Activated T-helper 1 cell treated with anti-CD3 and anti-CD28 coated beads, Interleukin-12 subunit alpha, Interleukin-12 subunit beta, Interleukin-2, Interleukin-4 antibody, amounts not matched to agents 30 ng/mL and 10 ng/mL and 1 ng/mL, durations not matched to agents 14 hours and 24 hours and 36 hours (primary cell): ENCODE measurements at regions of chr1 and their contacts with region 1.

Region 1: DNA sequence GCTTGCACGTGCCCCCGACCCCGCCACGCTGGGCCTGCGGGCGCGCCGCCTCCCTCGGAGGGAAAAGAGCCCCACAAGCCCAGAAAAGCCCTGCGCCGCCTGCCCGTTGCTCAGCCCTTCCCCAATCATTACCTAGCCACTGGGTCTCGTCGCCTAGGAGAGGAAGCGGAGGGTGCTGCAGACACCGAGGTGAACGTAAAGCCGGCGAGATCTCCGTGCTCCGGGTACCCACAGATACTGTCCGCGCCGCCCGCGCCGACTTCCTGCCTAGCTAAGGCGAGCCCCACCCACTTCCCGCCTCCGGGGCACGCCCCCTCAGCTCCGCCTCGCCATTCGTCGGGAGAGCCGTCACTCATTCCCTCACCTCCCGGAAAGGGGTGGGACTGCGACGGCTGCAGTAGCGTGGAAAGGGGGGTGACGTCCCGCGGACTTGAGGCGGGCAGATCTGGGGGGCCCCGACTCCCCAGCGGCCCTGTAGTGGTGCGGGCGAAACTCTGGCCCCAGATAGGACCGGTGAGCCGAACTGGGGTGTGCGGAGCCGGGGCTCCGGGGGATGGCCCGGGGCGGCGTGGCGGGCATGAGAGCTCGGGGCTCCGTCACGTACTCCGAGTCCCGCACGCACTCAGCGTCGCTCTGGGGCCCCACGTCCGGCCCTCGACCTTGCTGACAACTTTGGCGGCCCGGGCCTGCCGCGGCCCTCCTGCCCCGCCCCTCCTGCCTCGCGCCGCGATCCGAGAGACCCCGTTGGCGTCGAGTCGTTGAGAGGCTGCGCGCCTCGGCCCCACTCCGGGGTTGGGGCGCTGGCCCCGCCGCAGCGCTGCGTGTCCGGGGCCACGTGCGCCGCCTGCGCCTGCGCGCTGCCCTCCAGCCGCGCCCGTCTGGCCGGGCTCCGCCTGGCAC is at the start of gene ENO1:
- DNase-seq: peak; percentile 99
- H3K4me3 Mint-ChIP-seq: peak within 1 kb of the TSS; percentile 99
- H3K27ac Mint-ChIP-seq: peak within 1 kb of the TSS; percentile 100
- H3K4me1 Mint-ChIP-seq: peaks cover 43% of the 10 kb centered on the region
- H3K27me3 Mint-ChIP-seq: peaks cover 2% of the 10 kb centered on the region
- total RNA-seq, gene ENO1: 3,370 and 3,388 TPM in 2 replicates

Region 2: GRCh38 chr1:8604041-8604945 is 274.4 kb before region 1 on chr1:
- intact Hi-C with region 1: loop called (anchors 1 kb)
- DNase-seq: peak; percentile 34
- H3K4me3 Mint-ChIP-seq: peak overlapping the region; percentile 61
- H3K27ac Mint-ChIP-seq: peak overlapping the region; percentile 94
- H3K4me1 Mint-ChIP-seq: peaks cover 48% of the 10 kb centered on the region
- H3K27me3 Mint-ChIP-seq: no peaks in the 10 kb centered on the region

Region 3: DNA sequence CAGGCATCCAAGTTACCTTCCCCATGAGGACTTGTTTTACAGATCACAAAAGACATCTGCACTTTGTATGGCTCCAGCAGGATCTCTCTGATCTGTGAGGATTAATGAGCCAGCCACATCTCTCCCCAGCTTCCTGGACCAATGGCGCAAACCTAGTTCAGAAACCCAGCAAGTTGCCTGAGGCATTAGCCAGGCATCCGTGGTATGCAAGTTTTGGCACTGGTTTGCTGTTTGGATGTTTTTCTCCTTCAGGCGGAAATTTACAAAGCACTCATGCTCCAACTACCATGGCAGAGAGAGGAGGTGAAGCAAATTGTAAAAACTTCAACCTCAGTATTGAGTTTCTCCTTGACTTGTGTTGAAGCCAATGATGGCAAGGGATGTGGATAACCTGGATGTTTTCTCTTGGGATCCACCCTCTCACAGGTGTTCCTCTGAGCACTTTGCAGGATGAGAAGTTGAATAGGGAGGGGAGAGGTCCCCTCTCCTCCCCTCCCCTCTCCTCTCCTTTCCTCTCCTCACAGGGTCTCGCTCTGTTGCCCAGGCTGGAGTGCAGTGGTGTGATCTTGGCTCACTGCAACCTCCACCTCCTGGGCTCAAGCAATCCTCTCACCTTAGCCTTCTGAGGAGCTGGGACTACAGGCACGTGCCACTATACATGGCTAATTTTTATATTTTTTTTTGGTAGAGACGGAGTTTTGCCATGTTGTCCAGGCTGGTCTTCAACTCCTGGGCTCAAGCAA is 25.4 kb after region 1 on chr1:
- intact Hi-C with region 1: loop called (anchors 1 kb)
- DNase-seq: no peak
- H3K4me3 Mint-ChIP-seq: no peak overlapping the region
- H3K27ac Mint-ChIP-seq: peak overlapping the region; percentile 80
- H3K4me1 Mint-ChIP-seq: peaks cover 51% of the 10 kb centered on the region
- H3K27me3 Mint-ChIP-seq: no peaks in the 10 kb centered on the region

Region 4: GRCh38 chr1:8962812-8963530 is 84.3 kb after region 1 on chr1:
- intact Hi-C with region 1: loop called (anchors 2 kb)
- DNase-seq: no peak
- H3K4me3 Mint-ChIP-seq: peak overlapping the region; percentile 49
- H3K27ac Mint-ChIP-seq: peak overlapping the region; percentile 74
- H3K4me1 Mint-ChIP-seq: peaks cover 85% of the 10 kb centered on the region
- H3K27me3 Mint-ChIP-seq: no peaks in the 10 kb centered on the region

Region 5: GRCh38 chr1:8987881-8988617 is 109.4 kb after region 1 on chr1:
- intact Hi-C with region 1: loop called (anchors 1 kb)
- DNase-seq: peak; percentile 66
- H3K4me3 Mint-ChIP-seq: peak overlapping the region; percentile 53
- H3K27ac Mint-ChIP-seq: peak overlapping the region; percentile 92
- H3K4me1 Mint-ChIP-seq: peaks cover 68% of the 10 kb centered on the region
- H3K27me3 Mint-ChIP-seq: no peaks in the 10 kb centered on the region